HEK293 (cell line): ENCODE measurements at regions of chr20 and their contacts with region 1.

Region 1: GRCh38 chr20:57709931-57710799 is at the start of gene PMEPA1:
- H3K4me3 ChIP-seq: peak within 1 kb of the TSS; percentile 85
- H3K27ac ChIP-seq: peak within 1 kb of the TSS; percentile 85
- H3K4me1 ChIP-seq: peaks cover 11% of the 10 kb centered on the region
- CTCF ChIP-seq: peak; percentile 73

Region 2: DNA sequence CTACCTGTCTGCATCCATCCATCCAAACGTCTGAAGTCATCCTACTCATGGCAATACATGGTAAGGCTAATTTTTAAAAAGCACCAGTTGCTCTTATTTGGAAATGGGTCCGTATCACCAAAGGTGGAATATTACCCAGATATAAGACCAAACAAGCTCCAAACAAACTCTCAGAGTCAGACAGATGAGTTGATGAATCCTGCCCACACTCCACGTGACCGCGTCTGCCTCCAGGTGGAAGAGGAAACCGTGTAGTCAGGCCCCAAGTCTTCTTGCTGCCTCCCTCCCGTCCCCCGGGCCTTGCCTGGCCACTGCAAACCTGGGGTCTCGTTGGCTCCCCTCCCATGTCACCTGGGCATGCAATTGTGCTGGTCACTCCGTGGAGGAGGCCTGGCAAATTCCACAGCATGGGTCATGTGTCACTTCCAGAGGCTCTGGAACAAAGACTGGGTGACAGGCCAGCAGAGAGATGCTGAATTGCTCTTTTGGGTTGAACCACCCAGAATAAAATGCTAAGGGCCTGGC is 217.0 kb before region 1 on chr20:
- CTCF ChIA-PET with region 1: no interaction called
- POLR2A ChIA-PET with region 1: no interaction called
- H3K4me3 ChIP-seq: no peak overlapping the region
- H3K27ac ChIP-seq: no peak overlapping the region
- H3K4me1 ChIP-seq: no peaks in the 10 kb centered on the region
- CTCF ChIP-seq: no peak

Region 3: DNA sequence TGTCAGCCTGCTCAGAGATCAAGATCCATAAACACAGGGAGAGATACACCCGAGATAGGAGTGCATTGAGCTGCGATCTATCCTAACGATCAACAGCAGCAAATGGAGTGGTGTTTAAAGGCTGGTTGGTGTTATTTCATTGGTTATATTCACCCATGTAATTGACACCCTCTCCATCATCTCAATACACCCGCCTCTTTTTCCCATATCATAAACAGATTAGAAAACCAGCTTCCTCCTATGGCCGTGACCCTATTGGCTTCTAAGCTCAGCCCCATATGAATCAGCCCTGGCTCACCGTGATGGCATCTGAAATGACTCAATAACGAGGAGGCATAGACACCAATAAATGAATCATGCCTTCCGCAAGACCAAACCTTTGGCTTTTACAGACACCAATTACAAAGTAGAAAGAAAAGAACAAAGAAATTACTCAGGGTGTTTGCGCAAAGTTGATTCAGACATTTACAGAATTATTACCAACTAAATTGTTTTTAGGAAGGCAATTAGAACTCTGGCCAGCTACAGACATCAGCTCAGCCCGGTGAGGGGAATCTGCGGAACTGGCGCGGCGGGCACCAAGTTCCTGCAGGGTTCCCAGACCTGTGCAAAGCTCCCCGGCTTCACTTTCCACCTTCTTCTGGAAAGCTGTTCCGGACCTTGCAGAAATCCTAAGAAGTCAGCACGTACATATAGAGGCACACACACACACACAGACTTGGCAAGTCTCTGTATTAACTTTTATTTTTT is 11.9 kb before region 1 on chr20:
- CTCF ChIA-PET with region 1: interaction called, 3 read pairs
- POLR2A ChIA-PET with region 1: interaction called, 42 read pairs
- H3K4me3 ChIP-seq: peak overlapping the region; percentile 3; the same call in 1 of the 2 replicates
- H3K27ac ChIP-seq: no peak overlapping the region
- H3K4me1 ChIP-seq: peaks cover 10% of the 10 kb centered on the region; the same call in 1 of the 2 replicates
- CTCF ChIP-seq: no peak

Region 4: GRCh38 chr20:57748601-57749130 is 38.5 kb after region 1 on chr20:
- CTCF ChIA-PET with region 1: interaction called, 5 read pairs
- POLR2A ChIA-PET with region 1: interaction called, 20 read pairs
- H3K4me3 ChIP-seq: peak overlapping the region; percentile 23
- H3K27ac ChIP-seq: peak overlapping the region; percentile 73; the same call in 1 of the 2 replicates
- H3K4me1 ChIP-seq: peaks cover 13% of the 10 kb centered on the region
- CTCF ChIP-seq: peak; percentile 57; the same call in 1 of the 2 replicates

Region 5: DNA sequence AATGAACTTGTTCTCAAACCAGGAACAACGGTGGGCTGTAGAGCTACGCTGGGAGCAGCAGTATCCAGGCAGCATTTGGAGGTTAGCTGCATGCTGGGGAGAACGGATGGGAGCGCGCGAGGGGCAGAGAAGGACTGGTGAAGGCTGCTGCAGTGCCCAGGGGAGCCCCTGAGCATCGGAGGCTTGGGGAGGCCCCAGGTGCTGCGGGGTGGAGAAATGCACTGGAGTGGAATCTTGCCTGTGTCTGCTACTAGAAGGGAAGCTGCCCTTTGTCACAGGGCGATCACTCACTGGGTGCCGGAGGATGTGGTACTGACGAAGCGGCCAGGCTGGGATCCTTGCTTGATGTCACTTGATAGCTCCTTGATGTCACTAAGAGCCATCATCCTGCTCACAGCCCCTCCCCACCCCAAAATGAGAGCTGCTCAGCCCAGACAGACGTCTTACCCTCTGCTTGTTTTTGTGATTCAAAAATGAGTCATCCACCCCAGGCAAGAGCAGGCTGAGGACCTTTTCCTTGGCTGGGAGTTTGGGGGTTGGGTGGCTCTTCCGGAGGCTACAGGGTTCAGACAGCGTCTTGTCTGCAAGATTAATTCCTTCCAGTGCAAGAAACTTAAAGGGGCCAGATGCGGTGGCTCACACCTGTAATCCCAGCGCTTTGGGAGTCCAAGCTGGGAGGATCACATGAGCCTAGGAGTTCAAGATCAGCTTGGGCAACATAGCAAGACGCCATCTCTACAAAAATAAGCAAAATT is 62.3 kb after region 1 on chr20:
- CTCF ChIA-PET with region 1: no interaction called
- POLR2A ChIA-PET with region 1: interaction called, 11 read pairs
- H3K4me3 ChIP-seq: no peak overlapping the region
- H3K27ac ChIP-seq: no peak overlapping the region
- H3K4me1 ChIP-seq: no peaks in the 10 kb centered on the region
- CTCF ChIP-seq: no peak